ENCODE measurements at regions of chr10 and their contacts with region 1.

Region 1: GRCh38 chr10:23314835-23315239 is 29.8 kb downstream of the C10orf67 start:
- DNase-seq: peak; percentile 29
- H3K4me3 Mint-ChIP-seq: no peak overlapping the region
- H3K27ac Mint-ChIP-seq: no peak overlapping the region
- H3K4me1 Mint-ChIP-seq: peaks cover 5% of the 10 kb centered on the region
- H3K27me3 Mint-ChIP-seq: no peaks in the 10 kb centered on the region

Region 2: GRCh38 chr10:23656735-23657134 is 341.9 kb after region 1 on chr10:
- intact Hi-C with region 1: loop called (anchors 1 kb)
- DNase-seq: no peak
- H3K4me3 Mint-ChIP-seq: no peak overlapping the region
- H3K27ac Mint-ChIP-seq: no peak overlapping the region
- H3K4me1 Mint-ChIP-seq: no peaks in the 10 kb centered on the region
- H3K27me3 Mint-ChIP-seq: no peaks in the 10 kb centered on the region

Region 3: GRCh38 chr10:23702977-23703414 is 388.2 kb after region 1 on chr10:
- intact Hi-C with region 1: loop called (anchors 1 kb)
- DNase-seq: peak; percentile 14
- H3K4me3 Mint-ChIP-seq: no peak overlapping the region
- H3K27ac Mint-ChIP-seq: no peak overlapping the region
- H3K4me1 Mint-ChIP-seq: no peaks in the 10 kb centered on the region
- H3K27me3 Mint-ChIP-seq: peaks cover 14% of the 10 kb centered on the region

Region 4: GRCh38 chr10:24201503-24202180 is 886.8 kb after region 1 on chr10:
- intact Hi-C with region 1: loop called (anchors 5 kb)
- DNase-seq: no peak
- H3K4me3 Mint-ChIP-seq: no peak overlapping the region
- H3K27ac Mint-ChIP-seq: no peak overlapping the region
- H3K4me1 Mint-ChIP-seq: peaks cover 9% of the 10 kb centered on the region
- H3K27me3 Mint-ChIP-seq: peaks cover 22% of the 10 kb centered on the region